ENCODE measurements at regions of chr1 and their contacts with region 1.

Region 1: DNA sequence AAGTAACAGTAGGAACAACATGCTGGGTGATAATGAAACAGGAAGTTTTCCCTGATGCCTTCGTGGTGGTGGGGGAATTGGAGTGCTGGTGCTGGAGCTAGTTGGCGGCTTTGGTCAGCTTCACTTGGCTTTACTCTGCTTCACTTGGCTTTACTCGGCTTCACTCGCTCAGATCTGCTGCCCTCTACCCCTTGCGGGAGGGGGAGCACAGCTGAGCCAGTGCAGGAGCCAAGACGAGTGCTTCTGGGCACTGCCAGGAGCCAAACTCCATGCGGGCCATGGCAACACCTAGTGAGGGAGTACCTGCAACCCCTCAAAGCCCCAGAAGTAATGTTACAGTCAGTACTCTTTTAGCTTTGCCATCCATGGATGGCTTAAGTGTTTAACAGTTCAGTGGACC is 10.6 kb upstream of the PRKACB start:
- DNase-seq: no peak
- H3K4me3 ChIP-seq: no peak overlapping the region
- H3K27ac ChIP-seq: no peak overlapping the region
- H3K4me1 ChIP-seq: no peaks in the 10 kb centered on the region
- H3K27me3 ChIP-seq: no peaks in the 10 kb centered on the region
- CTCF ChIP-seq: no peak
- EP300 ChIP-seq: no peak
- RAD21 ChIP-seq: no peak

Region 2: DNA sequence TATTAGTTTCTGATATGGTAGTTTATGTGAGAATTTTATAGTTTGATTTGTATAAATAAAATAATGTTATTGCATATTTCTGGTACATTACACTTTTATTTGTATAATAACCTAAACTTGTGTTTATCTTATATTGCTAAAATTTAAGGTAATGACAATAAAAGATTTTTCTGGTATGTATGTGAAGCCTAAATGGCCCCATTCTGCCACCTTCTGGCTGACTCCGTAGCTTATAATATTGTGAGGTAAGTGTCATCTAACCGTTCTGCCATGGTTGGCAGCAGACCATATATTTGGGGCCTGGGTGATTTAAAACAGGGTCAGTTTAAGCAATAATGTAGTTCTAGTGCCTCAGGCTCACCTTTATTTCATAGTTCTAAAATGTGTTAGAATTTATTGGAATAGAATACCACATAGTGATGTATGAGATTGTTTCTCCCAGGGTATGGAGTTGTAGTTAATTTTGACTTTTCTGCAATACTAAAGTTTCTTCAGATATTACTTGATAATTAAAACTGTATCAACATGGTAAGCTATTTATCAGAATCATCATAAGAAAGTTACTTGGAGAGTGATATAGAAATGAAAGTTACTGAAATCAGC is 10.6 kb before region 1 on chr1:
- CTCF ChIA-PET with region 1: interaction called, 11 read pairs
- POLR2A ChIA-PET with region 1: no interaction called
- DNase-seq: peak; percentile 26
- H3K4me3 ChIP-seq: no peak overlapping the region
- H3K27ac ChIP-seq: no peak overlapping the region
- H3K4me1 ChIP-seq: peaks cover 2 to 5% of the 10 kb centered on the region in 2 experiments; a peak in 2 of 4 replicates
- H3K27me3 ChIP-seq: no peaks in the 10 kb centered on the region
- CTCF ChIP-seq: peak; percentile 89
- EP300 ChIP-seq: no peak
- RAD21 ChIP-seq: peak; percentile 83

Region 3: GRCh38 chr1:84152649-84153056 is 19.2 kb after region 1 on chr1:
- CTCF ChIA-PET with region 1: no interaction called
- POLR2A ChIA-PET with region 1: no interaction called
- DNase-seq: no peak
- H3K4me3 ChIP-seq: no peak overlapping the region
- H3K27ac ChIP-seq: no peak overlapping the region
- H3K4me1 ChIP-seq: peaks cover 0 to 7% of the 10 kb centered on the region in 2 experiments; a peak in 3 of 4 replicates
- H3K27me3 ChIP-seq: no peaks in the 10 kb centered on the region
- CTCF ChIP-seq: no peak
- EP300 ChIP-seq: no peak
- RAD21 ChIP-seq: no peak

Measured in SK-N-SH (cell line).